ENCODE measurements at regions of chr7 and their contacts with region 1.

Region 1: DNA sequence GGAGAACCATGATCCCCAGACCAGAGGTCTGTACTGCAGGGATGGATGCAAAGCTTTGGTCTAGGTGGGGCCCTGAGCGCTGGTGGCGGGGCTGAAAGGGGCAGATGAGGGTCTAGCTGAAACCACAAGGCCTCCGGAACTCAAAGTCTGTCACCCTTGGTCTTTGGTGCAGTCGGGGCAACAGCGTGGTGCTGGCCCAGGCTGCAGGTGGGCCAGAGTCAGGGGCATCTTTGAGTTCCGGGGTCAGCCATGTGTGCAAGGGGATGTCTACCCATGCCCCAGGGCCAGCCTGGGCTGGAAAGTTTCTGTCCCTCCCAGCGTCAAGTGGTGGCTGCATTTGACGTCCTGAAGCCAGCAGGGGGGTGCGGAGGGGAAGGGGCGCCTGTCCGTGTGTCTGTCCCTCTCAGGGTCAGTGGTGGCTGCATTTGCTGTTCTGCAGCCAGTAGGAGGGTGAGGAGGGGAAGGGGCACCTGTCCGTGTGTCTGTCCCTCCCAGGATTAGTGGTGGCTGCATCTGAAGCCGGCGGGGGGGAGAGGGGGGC is 683 bp downstream of the BRAT1 start:
- DNase-seq: no peak
- ATAC-seq: no peak

Region 2: GRCh38 chr7:1664711-1665548 is 889.7 kb before region 1 on chr7:
- intact Hi-C with region 1: no loop called
- DNase-seq: peak; percentile 74
- ATAC-seq: peak; percentile 50 to 67

Region 3: DNA sequence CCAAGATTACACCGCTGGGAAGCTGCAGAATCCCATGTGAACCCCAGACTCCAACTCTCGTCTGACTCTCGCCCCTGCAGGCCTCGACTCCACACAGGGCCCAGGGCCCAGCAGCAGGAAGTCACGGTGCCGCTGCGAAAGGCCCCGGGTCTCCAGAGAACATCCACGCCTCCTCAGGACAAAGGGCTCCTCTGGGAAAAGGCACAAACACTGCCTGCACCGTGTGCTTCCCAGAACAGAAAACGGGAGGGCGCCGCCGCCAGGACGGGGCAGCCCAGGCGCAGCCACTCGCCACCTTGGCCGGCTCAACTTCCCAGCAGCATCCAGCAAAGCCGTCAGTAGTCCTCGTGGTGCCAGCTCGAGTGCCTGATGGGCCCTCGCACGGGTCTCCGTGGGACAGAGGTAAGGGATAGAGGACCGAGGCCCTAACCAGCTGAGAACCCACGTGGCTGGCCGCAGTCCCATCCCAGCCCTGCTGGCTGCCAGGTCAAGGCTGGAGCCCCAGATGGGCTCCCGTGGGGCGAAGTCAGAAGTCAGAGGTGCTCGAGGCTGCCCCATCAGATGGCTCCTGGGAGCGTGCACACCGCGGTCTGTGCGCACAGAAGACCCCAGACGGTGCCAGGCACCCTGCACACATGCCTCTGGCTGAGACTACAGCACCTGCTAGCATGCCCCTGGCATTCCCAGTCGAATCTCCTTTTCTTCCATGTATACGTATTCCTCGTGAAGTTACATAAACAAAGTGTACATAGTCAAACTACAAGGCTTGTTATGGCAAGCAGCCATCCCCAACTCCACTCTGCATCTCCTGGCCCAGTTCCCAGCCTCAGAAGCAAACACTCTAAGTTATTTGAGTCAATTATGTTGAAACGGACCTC is 382.1 kb before region 1 on chr7:
- intact Hi-C with region 1: no loop called
- DNase-seq: no peak
- ATAC-seq: peak in 1 of 2 donors; percentile 42

Region 4: GRCh38 chr7:2258661-2259365 is 295.8 kb before region 1 on chr7:
- intact Hi-C with region 1: no loop called
- DNase-seq: no peak
- ATAC-seq: no peak

Region 5: DNA sequence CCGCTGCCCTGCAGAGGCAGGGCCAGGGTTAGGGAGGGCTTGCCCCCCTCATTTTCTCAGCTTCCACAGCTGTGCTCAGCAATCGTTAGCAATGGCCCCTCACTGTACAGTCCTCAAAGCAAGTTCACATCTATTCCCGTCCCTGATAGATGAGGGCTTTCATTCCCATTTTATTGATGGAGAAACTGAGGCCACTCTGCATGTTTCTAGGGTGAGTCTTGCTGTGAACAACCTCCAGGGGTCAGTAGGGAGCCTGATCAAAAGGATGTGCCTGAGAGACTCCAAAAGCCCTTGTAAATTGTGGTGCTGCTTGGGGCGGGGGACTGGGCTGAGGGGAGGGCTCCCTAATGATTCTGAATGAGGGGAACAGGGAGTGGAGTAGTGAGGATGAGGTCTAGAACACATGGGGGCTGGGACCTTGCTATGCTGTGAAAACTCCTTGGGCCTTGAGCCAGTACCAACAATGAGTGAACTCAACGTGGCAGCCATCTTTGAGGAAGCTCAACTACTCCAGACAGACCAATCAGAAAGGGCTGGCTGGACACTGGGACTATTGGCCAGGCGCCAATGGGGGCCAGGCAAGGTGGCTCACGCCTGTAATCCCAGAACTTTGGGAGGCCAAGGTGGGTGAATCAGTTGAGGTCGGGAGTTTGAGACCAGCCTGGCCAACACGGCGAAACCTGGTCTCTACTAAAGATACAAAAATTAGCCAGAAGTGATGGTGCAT is 71.8 kb before region 1 on chr7:
- intact Hi-C with region 1: loop called in 1 of 2 experiments (anchors 5 kb)
- DNase-seq: no peak
- ATAC-seq: no peak

Region 6: DNA sequence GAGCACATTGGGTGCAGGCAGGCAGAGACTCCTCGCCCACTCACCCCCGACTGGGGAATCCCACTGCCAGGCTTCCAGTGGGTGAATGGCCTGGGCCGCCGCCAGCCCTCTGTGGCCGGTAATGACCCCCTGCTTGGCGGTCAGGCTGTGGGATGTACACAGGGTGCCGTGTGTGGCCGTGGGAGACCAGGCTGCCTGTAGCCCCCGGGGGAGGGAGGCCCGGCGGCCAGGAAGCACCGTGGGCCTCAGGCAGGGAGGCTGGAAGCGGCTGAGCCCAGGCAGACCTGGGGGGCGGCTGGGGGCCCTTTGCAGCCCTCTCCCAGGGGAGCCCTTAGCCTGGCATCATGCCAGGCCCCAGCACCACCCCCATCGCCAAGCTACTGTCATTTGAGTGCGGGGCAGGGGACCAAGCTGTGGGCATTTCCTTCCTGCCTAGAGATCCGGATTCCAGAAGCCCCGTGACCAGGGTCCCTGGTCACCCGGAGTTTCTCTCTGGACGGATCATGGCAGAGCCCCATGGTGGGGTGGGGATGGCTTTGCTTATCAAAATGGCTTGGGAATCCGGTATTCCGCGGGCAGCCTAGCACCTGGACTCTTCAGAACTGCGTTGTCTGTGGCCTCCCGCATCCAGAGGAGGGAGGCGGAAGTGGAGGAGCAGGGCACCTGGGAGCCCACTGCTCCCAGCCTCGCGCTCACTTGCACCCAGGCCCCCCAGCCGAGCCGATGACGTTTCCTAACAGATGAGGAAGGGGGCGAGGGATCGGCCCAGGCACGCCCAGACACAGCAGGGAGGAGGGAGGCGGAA is 78.3 kb after region 1 on chr7:
- intact Hi-C with region 1: no loop called
- DNase-seq: peak; percentile 71
- ATAC-seq: peak; percentile 7 to 21